ENCODE measurements at regions of chr11 and their contacts with region 1.

Region 1: DNA sequence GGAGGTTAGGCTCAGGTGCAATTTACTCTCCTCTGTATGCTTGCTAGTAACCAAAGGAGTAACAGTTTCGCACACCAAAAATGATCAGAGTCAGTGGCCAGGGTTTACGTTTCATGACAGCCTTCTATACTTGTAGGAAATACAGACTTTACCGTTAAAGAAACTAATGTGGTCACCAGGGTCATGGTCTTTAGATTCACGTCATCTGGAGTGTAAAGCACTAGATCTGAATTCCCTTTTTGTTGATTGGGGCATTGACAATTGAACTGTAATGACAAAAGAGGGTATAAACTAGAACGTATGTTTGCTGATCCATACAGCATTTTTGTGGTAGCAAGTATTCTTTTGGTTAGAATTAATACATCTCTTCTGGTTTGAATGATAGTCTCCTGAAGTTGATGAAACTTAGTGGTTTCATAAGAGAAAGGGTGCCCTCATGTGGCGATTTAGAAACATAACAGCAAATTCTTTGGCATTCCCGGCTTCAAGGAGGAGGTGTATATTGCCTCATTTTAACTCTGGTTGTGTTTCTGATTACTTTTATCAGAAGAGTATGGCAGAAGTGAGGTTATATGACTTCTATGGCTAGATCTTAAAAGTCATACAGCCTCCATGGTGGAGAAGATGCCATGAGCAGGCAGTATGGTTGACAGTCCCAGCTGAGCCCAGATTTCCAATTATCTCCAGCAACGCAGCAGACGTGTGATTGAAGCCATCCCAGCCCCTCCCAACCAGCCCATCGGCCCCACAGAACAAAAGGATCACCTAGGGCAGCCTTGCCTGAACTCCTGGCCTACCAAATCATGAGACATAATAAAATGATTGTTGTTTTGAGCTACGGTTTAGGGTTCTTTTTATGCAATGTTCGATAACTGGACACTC is 35.1 kb downstream of the MMP7 start:
- DNase-seq: peak; percentile 28
- H3K4me3 ChIP-seq: no peak overlapping the region
- H3K27ac ChIP-seq: no peak overlapping the region
- H3K4me1 ChIP-seq: peaks cover 0 to 23% (median 14%) of the 10 kb centered on the region in 4 donors
- H3K27me3 ChIP-seq: no peaks in the 10 kb centered on the region
- CTCF ChIP-seq: peak; percentile 67 to 84 (median 71)
- EP300 ChIP-seq: no peak
- POLR2A ChIP-seq: no peak

Region 2: GRCh38 chr11:102287964-102288724 is 207.3 kb before region 1 on chr11:
- in situ Hi-C with region 1: loop called in 2 of 4 experiments (anchors 10 kb)
- intact Hi-C with region 1: loop called (anchors 10 kb)
- DNase-seq: peak; percentile 37
- H3K4me3 ChIP-seq: peak overlapping the region in 1 of 4 donors; percentile 9
- H3K27ac ChIP-seq: peak overlapping the region; percentile 63 to 71 (median 66)
- H3K4me1 ChIP-seq: peaks cover 0 to 9% (median 2%) of the 10 kb centered on the region in 4 donors
- H3K27me3 ChIP-seq: no peaks in the 10 kb centered on the region
- CTCF ChIP-seq: peak; percentile 71 to 89 (median 79)
- EP300 ChIP-seq: no peak
- POLR2A ChIP-seq: no peak

Region 3: DNA sequence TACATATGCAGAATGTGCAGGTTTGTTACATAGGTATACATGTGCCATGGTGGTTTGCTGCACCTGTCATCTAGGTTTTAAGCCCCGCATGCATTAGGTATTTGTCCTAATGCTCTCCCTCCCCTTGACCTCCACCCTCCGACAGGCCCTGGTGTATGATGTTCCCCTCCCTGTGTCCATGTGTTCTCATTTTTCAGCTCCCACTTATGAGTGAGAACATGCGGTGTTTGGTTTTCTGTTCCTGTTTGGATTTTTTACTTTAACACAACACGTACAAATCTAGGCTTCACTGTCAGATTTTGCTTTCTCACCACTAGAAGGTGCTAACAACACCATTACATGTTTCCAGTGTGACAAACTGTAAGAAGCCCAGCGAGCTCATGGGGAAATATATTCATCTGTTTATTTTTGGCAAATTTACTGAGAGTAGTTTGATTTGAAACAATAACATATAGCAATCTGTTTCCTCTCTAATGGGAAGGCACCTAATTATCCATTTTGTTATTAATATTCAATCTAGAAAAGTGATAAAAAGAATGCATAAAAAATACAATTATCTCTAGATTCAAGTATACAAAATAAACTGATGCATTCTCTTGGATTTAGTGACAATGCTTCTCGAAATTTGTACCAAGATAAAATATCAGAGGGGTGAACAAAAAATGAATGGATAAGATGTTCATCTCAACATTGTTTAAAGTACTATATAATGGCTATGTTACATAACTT is 201.4 kb before region 1 on chr11:
- in situ Hi-C with region 1: loop called in 2 of 4 experiments (anchors 10 kb)
- intact Hi-C with region 1: loop called (anchors 10 kb)
- DNase-seq: no peak
- H3K4me3 ChIP-seq: no peak overlapping the region
- H3K27ac ChIP-seq: no peak overlapping the region
- H3K4me1 ChIP-seq: peaks cover 0 to 7% (median 0%) of the 10 kb centered on the region in 4 donors
- H3K27me3 ChIP-seq: no peaks in the 10 kb centered on the region
- CTCF ChIP-seq: peak; percentile 66 to 82 (median 71)
- EP300 ChIP-seq: no peak
- POLR2A ChIP-seq: no peak

Region 4: DNA sequence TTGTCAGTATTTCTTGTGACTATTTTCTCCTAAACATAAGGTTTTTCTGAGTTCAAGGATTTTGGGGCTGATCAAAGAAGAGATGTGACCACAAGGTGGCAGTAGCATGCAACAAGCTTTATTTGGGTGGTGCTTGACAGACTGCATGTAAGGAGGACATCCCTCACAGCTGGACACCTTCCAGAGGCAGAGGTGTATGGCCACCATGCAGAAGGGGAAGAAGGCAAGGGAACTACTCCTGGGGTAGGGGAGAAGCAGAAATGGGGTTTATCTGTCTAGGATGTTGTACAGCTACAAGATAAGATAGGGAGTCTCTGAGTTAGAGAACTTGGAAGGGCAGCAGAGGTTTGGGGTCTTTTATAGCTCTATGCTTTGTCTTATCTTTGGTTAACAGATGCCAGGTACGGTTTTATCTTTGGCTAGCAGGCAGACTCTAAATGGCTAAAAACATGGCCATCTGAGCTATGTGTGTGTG is 153.5 kb before region 1 on chr11:
- in situ Hi-C with region 1: loop called in 1 of 4 experiments (anchors 5 kb)
- intact Hi-C with region 1: loop called (anchors 5 kb)
- DNase-seq: peak; percentile 79
- H3K4me3 ChIP-seq: no peak overlapping the region
- H3K27ac ChIP-seq: no peak overlapping the region
- H3K4me1 ChIP-seq: peaks cover 5 to 15% (median 10%) of the 10 kb centered on the region in 4 donors
- H3K27me3 ChIP-seq: no peaks in the 10 kb centered on the region
- CTCF ChIP-seq: peak; percentile 76 to 83 (median 80)
- EP300 ChIP-seq: no peak
- POLR2A ChIP-seq: no peak

Region 5: GRCh38 chr11:102367364-102367763 is 128.0 kb before region 1 on chr11:
- in situ Hi-C with region 1: loop called in 1 of 4 experiments (anchors 10 kb)
- intact Hi-C with region 1: no loop called
- DNase-seq: no peak
- H3K4me3 ChIP-seq: no peak overlapping the region
- H3K27ac ChIP-seq: peak overlapping the region in 2 of 4 donors; percentile 12 to 23
- H3K4me1 ChIP-seq: peaks cover 0 to 12% (median 4%) of the 10 kb centered on the region in 4 donors
- H3K27me3 ChIP-seq: no peaks in the 10 kb centered on the region
- CTCF ChIP-seq: no peak
- EP300 ChIP-seq: no peak
- POLR2A ChIP-seq: no peak

Region 6: GRCh38 chr11:102390667-102391465 is 104.5 kb before region 1 on chr11:
- in situ Hi-C with region 1: loop called (anchors 5 to 25 kb)
- intact Hi-C with region 1: loop called (anchors 5 kb)
- DNase-seq: peak; percentile 68
- H3K4me3 ChIP-seq: no peak overlapping the region
- H3K27ac ChIP-seq: no peak overlapping the region
- H3K4me1 ChIP-seq: peaks cover 0 to 7% (median 0%) of the 10 kb centered on the region in 4 donors
- H3K27me3 ChIP-seq: no peaks in the 10 kb centered on the region
- CTCF ChIP-seq: peak; percentile 86 to 90 (median 89)
- EP300 ChIP-seq: no peak
- POLR2A ChIP-seq: no peak

Region 7: DNA sequence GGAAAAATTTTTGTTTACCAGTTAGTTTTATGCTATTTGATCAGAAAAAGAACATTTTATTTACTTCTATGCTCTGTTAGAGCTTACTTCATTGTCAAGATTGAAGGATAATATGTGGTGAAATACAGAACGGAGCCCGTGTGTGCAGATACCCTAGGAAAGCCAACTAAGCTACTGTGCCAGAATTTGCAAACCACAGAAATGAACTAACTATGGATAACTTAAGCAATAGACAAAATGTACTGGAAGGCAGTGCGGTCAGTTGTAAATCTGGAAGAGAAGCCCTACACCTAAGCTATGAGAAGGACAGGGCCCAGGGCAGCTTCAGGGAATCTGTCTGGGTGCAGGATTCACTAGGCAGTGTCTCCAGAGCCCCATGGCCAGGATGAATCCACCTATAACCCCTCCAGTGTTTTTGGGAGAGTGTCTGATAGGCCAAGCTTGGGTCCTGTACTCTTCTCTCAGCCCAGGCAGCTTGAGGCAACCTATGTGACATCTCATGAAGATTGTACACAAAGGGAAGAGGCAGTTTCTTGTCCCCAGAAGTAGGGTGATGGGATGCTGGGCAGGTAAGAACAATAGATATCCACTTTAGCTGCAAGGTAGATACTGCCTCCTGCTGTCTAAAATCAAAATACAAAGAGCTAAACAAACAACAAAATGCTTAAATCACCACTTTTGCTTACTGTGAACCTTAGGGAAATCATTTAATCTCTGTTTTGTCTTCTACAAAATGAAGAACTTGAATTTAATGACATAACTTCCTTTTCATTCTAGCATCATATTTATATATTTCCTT is 23.1 kb after region 1 on chr11:
- in situ Hi-C with region 1: no loop called
- intact Hi-C with region 1: no loop called
- DNase-seq: no peak
- H3K4me3 ChIP-seq: no peak overlapping the region
- H3K27ac ChIP-seq: no peak overlapping the region
- H3K4me1 ChIP-seq: peaks cover 0 to 9% (median 0%) of the 10 kb centered on the region in 4 donors
- H3K27me3 ChIP-seq: no peaks in the 10 kb centered on the region
- CTCF ChIP-seq: no peak
- EP300 ChIP-seq: no peak
- POLR2A ChIP-seq: no peak

Region 8: DNA sequence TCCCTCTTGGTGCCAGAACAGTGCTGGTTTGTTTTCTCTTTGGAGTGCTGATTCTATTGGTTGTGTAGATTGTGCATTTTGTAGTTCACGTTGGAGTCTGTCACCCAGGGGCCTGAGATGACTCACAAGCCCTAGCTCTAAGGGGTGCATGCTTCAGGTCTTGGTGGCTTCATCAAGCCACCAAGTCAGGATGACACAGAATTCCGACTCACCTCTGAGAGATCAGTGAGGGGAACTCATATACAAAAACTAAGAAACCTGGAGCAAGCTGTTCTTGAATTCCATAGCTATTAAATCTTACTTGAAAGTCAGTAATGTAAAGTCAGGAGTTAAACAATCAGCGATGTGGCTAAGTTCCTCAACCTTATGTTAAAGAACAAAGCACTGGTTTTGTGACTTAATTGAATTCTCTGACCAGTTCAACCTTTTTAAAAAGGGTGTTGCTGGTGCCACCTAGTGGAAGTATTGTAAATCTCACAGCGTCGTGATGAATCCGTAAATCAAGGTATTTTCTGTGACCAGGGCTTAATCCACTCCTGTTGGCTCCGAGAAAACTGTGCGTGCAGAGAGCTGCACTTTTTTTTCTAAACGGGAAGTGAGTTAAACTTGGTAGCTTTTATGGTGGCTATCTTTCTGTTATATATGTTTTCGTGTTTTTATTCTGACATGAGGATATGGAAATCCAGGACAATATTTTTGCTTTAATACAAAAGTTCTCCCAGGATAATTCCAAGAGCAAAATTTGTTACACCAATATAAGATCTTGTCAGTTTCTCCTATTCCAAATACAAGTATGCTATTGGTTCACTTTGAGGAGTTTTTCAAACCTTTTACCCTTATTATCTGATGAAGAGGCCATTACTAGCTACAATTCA is 445.5 kb after region 1 on chr11:
- in situ Hi-C with region 1: loop called in 1 of 4 experiments (anchors 25 kb)
- intact Hi-C with region 1: no loop called
- DNase-seq: peak; percentile 45
- H3K4me3 ChIP-seq: no peak overlapping the region
- H3K27ac ChIP-seq: no peak overlapping the region
- H3K4me1 ChIP-seq: peaks cover 0 to 5% (median 2%) of the 10 kb centered on the region in 4 donors
- H3K27me3 ChIP-seq: no peaks in the 10 kb centered on the region
- CTCF ChIP-seq: peak; percentile 75 to 87 (median 83)
- EP300 ChIP-seq: no peak
- POLR2A ChIP-seq: no peak